Activated CD8-positive, alpha-beta T cell treated with anti-CD3 and anti-CD28 coated beads for 36 hours (primary cell): ENCODE measurements at regions of chr12 and their contacts with region 1.

Region 1: DNA sequence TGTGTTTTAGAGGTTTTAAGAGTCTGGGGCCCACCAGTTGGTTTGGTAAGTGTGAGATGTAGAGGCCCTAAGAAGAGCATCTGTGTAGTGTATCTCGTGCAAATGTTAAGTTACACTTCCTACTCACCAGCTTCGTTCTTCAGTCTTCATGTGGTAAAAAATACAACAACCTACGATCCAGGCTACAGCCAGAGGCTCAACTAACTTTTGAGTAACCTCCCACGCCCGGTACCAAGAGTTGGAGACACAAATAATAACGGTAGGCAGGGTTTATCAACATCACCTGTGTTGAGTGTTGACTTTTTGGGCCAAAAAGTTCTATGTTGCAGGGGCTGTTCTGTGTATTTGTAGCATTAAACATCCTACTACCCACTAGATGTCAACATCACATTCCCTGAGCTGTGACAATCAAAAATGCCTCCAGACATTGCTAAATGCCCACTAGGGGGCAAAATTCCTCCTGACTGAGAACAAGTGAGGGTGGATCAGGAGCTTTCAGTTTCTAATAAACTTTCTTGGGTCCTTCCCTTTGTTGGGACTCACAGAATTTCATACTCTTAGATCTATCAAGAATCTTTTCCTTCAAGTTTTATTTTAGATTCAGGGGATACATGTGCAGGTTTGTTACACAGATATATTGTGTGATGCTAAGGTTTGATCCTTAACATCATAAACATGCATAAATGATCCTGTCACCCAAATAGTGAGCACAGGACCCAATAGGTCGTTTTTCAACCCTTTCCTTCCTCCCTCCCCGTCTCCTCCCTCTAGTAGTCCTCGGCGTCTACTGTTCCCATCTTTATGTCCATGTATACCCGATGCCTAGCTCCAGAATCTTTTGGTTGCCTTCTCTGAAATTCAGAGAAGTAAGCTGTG is 94.7 kb downstream of the SLC2A13 start:
- DNase-seq: peak; percentile 63
- ATAC-seq: peak; percentile 84
- H3K4me3 Mint-ChIP-seq: peak overlapping the region; percentile 6
- H3K27ac Mint-ChIP-seq: no peak overlapping the region
- H3K4me1 Mint-ChIP-seq: peaks cover 22% of the 10 kb centered on the region
- H3K27me3 Mint-ChIP-seq: no peaks in the 10 kb centered on the region
- CTCF ChIP-seq: peak; percentile 69

Region 2: GRCh38 chr12:39990122-39991101 is 20.7 kb before region 1 on chr12:
- CTCF ChIA-PET with region 1: interaction called, 18 read pairs
- POLR2A ChIA-PET with region 1: no interaction called
- intact Hi-C with region 1: no loop called
- DNase-seq: peak; percentile 82
- ATAC-seq: peak; percentile 91
- H3K4me3 Mint-ChIP-seq: no peak overlapping the region
- H3K27ac Mint-ChIP-seq: no peak overlapping the region
- H3K4me1 Mint-ChIP-seq: no peaks in the 10 kb centered on the region
- H3K27me3 Mint-ChIP-seq: no peaks in the 10 kb centered on the region
- CTCF ChIP-seq: peak; percentile 92

Region 3: GRCh38 chr12:40032433-40033241 is 21.5 kb after region 1 on chr12:
- CTCF ChIA-PET with region 1: interaction called, 16 read pairs
- POLR2A ChIA-PET with region 1: no interaction called
- intact Hi-C with region 1: no loop called
- DNase-seq: no peak
- ATAC-seq: no peak
- H3K4me3 Mint-ChIP-seq: no peak overlapping the region
- H3K27ac Mint-ChIP-seq: no peak overlapping the region
- H3K4me1 Mint-ChIP-seq: no peaks in the 10 kb centered on the region
- H3K27me3 Mint-ChIP-seq: no peaks in the 10 kb centered on the region
- CTCF ChIP-seq: no peak

Region 4: DNA sequence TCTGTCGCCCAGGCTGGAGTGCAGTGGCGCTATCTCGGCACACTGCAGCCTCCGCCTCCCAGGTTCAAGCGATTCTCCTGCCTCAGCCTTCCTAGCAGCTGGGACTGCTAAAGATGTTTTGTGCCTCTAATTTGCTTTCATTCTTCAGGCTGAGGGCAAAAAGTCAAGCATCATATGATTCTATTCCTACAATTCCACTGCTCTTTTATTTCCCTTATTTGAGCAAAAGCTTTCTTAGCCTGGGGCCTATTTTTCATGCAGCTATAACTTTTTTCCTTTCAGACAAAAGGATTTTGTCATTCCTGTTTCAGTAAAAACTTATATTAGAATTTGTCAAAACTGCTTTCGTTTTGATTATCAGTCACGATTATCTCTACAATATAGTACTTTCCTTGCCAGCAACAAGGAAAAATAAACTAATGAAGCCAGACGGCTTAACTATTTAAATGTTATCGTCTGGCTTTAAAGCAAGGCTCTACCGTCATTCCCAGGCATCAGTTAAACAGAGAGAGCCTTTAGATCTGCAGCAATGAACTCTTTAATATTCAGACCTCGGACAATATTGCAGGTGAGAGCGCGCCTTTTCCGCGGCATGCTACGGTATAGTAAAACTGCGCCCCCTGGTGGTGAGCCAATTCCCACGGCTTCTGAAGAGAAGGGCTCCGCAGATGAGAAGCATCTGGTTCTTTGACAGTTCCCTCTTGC is 96.1 kb after region 1 on chr12:
- CTCF ChIA-PET with region 1: interaction called, 83 read pairs
- POLR2A ChIA-PET with region 1: interaction called, 4 read pairs
- intact Hi-C with region 1: loop called (anchors 1 kb)
- DNase-seq: peak; percentile 96
- ATAC-seq: peak; percentile 32
- H3K4me3 Mint-ChIP-seq: peak overlapping the region; percentile 68
- H3K27ac Mint-ChIP-seq: no peak overlapping the region
- H3K4me1 Mint-ChIP-seq: peaks cover 34% of the 10 kb centered on the region
- H3K27me3 Mint-ChIP-seq: peaks cover 6% of the 10 kb centered on the region
- CTCF ChIP-seq: peak; percentile 83

Region 5: DNA sequence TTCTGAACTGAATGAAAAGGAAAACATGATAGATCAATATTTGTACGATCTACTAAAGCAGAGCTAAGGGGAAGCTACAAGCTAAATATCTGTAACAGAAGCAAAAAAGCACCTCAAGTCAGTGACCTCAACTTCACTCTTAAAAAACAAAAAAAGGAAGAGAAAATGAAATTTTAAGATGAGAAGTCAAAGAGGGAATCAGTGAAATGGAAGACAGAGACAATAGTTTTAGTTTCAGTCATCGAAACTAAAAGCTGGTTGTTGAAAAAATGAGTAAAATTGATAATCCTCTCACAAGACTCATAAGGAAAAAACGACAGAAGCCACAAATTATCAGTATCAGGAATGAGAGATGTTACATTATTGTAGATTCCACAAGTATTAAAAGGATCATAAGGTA is 106.7 kb after region 1 on chr12:
- CTCF ChIA-PET with region 1: interaction called, 19 read pairs
- POLR2A ChIA-PET with region 1: no interaction called
- intact Hi-C with region 1: no loop called
- DNase-seq: no peak
- ATAC-seq: peak; percentile 27
- H3K4me3 Mint-ChIP-seq: no peak overlapping the region
- H3K27ac Mint-ChIP-seq: no peak overlapping the region
- H3K4me1 Mint-ChIP-seq: peaks cover 15% of the 10 kb centered on the region
- H3K27me3 Mint-ChIP-seq: peaks cover 15% of the 10 kb centered on the region
- CTCF ChIP-seq: no peak

Region 6: GRCh38 chr12:40208707-40209446 is 197.7 kb after region 1 on chr12:
- CTCF ChIA-PET with region 1: no interaction called
- POLR2A ChIA-PET with region 1: no interaction called
- intact Hi-C with region 1: no loop called
- DNase-seq: no peak
- ATAC-seq: no peak
- H3K4me3 Mint-ChIP-seq: no peak overlapping the region
- H3K27ac Mint-ChIP-seq: no peak overlapping the region
- H3K4me1 Mint-ChIP-seq: no peaks in the 10 kb centered on the region
- H3K27me3 Mint-ChIP-seq: peaks cover 5% of the 10 kb centered on the region
- CTCF ChIP-seq: no peak